ENCODE measurements at regions of chr16 and their contacts with region 1.

Region 1: GRCh38 chr16:88527186-88527936 is 42.8 kb upstream of the ZC3H18 start:
- DNase-seq: peak; percentile 78
- ATAC-seq: peak; percentile 81
- H3K4me3 Mint-ChIP-seq: no peak overlapping the region
- H3K27ac Mint-ChIP-seq: no peak overlapping the region
- H3K4me1 Mint-ChIP-seq: peaks cover 2% of the 10 kb centered on the region
- H3K27me3 Mint-ChIP-seq: no peaks in the 10 kb centered on the region

Region 2: DNA sequence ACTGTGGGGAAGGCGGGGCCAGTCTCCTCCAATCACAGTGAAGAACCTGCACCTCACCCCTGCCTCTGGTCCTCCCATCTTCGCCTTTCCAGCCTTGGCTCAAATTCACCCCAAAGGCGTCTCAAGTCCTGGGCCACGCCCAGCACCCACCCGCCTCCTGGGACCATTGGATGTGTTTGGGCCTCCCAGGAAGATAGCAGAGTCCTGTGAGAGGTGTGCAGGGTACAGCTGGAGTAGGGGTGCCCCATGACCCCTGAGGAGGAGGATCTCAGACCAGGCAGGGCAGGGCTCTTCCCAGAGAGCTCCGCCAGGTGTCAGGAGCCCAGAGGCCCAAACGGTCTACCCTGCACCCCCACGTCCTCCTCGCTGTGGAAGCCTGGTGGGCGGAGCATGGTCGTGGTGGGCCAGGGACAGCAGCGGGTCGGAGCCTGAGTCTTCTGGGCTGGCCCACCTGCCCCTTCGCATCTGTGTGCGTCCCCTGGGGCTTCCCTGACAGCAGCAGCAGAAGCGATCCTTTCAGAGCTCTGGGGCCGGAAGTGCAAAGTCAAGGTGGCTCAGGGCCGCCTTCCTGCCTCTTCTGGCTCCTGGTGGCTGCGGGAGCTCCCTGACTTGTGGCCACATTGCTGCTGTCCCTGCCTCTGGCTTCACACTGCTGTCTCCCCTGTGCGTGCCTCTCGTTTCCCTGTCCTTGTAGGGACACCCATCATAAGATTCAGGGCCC is 179.5 kb before region 1 on chr16:
- CTCF ChIA-PET with region 1: no interaction called
- POLR2A ChIA-PET with region 1: no interaction called
- intact Hi-C with region 1: no loop called
- DNase-seq: peak; percentile 50
- ATAC-seq: peak; percentile 53
- H3K4me3 Mint-ChIP-seq: no peak overlapping the region
- H3K27ac Mint-ChIP-seq: no peak overlapping the region
- H3K4me1 Mint-ChIP-seq: peaks cover 3% of the 10 kb centered on the region
- H3K27me3 Mint-ChIP-seq: no peaks in the 10 kb centered on the region

Region 3: GRCh38 chr16:88479793-88480760 is 47.3 kb before region 1 on chr16:
- CTCF ChIA-PET with region 1: no interaction called
- POLR2A ChIA-PET with region 1: no interaction called
- intact Hi-C with region 1: no loop called
- DNase-seq: peak; percentile 51
- ATAC-seq: peak; percentile 55
- H3K4me3 Mint-ChIP-seq: no peak overlapping the region
- H3K27ac Mint-ChIP-seq: no peak overlapping the region
- H3K4me1 Mint-ChIP-seq: peaks cover 39% of the 10 kb centered on the region
- H3K27me3 Mint-ChIP-seq: no peaks in the 10 kb centered on the region

Region 4: DNA sequence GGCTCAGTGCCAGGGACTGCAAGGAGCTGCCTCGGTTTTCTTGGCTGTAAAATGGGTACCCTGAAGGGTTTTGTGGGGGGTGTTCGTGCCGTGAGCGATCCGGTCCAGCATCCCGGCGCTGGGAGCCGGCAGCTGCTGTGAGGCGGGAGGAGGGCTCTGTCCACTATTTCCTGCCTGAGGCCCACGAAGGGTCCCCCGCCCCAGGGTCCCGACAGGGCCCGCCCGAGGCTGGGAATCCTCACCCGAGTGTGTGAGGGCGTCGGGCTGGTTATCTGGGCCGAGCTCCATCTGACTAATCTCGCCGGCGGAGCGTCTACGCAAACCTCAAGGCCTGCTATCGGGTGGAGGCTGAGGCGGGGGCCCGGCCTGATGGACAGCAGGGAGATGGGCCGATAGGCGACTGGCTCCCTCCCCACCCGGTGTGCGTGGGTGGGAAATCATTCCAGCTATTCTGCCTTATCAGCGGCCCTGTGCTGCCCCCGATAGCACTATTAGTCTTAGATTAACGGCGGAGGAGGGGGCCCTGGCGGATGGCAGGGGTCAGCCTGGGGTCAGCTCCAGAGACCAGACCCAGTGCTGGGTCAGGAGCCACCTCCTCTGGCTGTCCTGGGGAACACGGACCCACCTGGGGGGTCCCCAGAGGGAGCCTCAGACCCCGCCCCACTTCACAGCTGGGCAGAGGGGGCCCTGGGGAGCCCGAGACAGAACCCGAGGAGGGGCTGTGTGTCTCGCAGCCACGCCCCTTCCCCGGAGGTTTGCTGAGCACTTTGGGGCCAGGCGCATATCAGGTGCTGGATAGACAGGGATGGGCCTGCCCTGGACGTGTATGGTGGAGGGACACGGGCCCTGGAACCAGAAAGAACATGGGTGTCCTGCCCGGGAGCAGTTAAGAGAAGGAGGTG is 29.5 kb before region 1 on chr16:
- CTCF ChIA-PET with region 1: no interaction called
- POLR2A ChIA-PET with region 1: no interaction called
- intact Hi-C with region 1: no loop called
- DNase-seq: no peak
- ATAC-seq: no peak
- H3K4me3 Mint-ChIP-seq: no peak overlapping the region
- H3K27ac Mint-ChIP-seq: no peak overlapping the region
- H3K4me1 Mint-ChIP-seq: no peaks in the 10 kb centered on the region
- H3K27me3 Mint-ChIP-seq: no peaks in the 10 kb centered on the region

Region 5: GRCh38 chr16:88561485-88562369 is 34.4 kb after region 1 on chr16:
- CTCF ChIA-PET with region 1: interaction called, 3 read pairs
- POLR2A ChIA-PET with region 1: no interaction called
- intact Hi-C with region 1: loop called in 1 of 2 experiments (anchors 5 kb)
- DNase-seq: peak; percentile 72
- ATAC-seq: peak; percentile 49
- H3K4me3 Mint-ChIP-seq: no peak overlapping the region
- H3K27ac Mint-ChIP-seq: no peak overlapping the region
- H3K4me1 Mint-ChIP-seq: peaks cover 12% of the 10 kb centered on the region
- H3K27me3 Mint-ChIP-seq: peaks cover 3% of the 10 kb centered on the region